ENCODE measurements at regions of chr19 and their contacts with region 1.

Region 1: GRCh38 chr19:14916848-14917247 is 24.4 kb upstream of the OR7C2 start:
- DNase-seq: no peak
- ATAC-seq: 0 out of 2 replicates have a peak, but pooled peaks have one; percentile 60
- H3K4me3 ChIP-seq: no peak overlapping the region
- H3K27ac ChIP-seq: no peak overlapping the region
- H3K4me1 ChIP-seq: no peaks in the 10 kb centered on the region
- H3K27me3 ChIP-seq: no peaks in the 10 kb centered on the region
- CTCF ChIP-seq: peak; percentile 60

Region 2: GRCh38 chr19:14472202-14472938 is 444.5 kb before region 1 on chr19:
- CTCF ChIA-PET with region 1: no interaction called
- POLR2A ChIA-PET with region 1: no interaction called
- in situ Hi-C with region 1: no loop called
- intact Hi-C with region 1: no loop called
- DNase-seq: no peak
- ATAC-seq: peak; percentile 65
- H3K4me3 ChIP-seq: no peak overlapping the region
- H3K27ac ChIP-seq: no peak overlapping the region
- H3K4me1 ChIP-seq: peaks cover 20% of the 10 kb centered on the region
- H3K27me3 ChIP-seq: no peaks in the 10 kb centered on the region
- CTCF ChIP-seq: peak; percentile 96

Region 3: DNA sequence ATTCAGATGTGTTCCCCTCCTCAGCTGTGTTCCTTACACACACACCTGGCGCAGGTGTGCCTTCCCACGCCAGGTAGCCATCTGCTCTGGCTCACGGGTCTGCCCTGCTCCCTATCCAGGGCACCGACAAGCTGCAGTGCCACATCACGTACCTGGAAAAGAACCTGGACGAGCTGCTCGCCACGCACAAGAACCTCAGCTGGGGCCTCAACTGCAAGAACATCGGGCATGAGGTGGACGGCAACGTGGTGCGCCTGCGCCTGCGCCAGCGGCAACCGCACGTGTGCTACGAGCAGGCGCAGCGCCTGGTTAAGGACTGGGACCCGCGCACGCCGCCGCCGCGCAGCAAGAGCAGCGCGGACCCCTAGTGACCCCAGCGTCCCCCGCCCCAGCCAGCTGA is 105.9 kb after region 1 on chr19:
- CTCF ChIA-PET with region 1: no interaction called
- POLR2A ChIA-PET with region 1: no interaction called
- in situ Hi-C with region 1: no loop called
- intact Hi-C with region 1: loop called (anchors 10 kb)
- DNase-seq: no peak
- ATAC-seq: no peak
- H3K4me3 ChIP-seq: no peak overlapping the region
- H3K27ac ChIP-seq: no peak overlapping the region
- H3K4me1 ChIP-seq: no peaks in the 10 kb centered on the region
- H3K27me3 ChIP-seq: no peaks in the 10 kb centered on the region
- CTCF ChIP-seq: no peak

Measured in Panc1 (cell line).